Thyroid gland (tissue), 4 donors: ENCODE measurements at regions of chr1 and their contacts with region 1.

Region 1: DNA sequence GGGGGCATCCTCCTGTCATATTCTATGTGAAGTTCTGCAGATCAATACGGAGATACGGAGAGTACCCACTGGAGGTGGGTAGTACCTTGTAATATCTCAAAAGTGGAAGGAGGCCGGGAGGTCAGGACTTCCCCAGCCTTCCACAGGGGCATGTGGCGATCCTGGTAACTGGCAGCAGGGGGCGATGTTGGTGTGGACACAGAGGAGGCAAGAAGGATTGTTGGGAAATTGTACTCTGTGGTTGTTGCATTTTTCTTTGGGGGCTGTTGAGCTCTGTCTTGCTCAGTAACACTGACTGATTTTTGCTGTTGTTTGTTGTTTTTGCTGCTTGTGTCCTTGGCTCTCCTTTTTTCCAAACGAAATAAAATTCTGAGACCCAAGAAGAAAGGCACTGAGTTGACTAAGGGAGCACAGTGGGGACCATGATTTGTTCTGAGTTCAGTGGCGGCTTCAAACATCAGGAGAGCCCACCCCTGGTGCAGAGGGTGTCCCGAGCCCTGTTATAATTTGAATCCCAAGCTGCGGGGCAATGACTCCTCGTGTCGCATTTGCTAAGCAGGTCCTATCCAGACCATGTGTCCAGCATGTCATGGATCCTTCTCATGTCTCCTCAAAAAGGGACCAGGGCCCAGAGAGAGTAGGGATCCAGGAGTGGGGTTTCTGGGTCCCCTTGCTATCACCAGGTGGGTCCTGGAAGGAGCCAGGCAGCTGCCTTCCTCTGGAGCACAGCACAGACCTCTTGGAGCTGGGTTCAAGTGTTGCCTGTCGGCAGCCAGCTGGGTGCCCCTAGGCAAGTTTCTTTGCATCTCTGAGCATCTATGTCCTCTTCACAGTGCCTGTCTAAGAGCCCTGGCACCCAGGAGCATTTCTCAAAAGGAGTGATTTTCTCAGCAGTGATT is 22.8 kb downstream of the LHX4 start:
- DNase-seq: peak; percentile 48 to 60
- H3K4me3 ChIP-seq: no peak overlapping the region
- H3K27ac ChIP-seq: no peak overlapping the region
- H3K4me1 ChIP-seq: no peaks in the 10 kb centered on the region
- H3K27me3 ChIP-seq: no peaks in the 10 kb centered on the region
- CTCF ChIP-seq: peak in 4 of 6 experiments; percentile 40 to 65 (median 58)
- POLR2A ChIP-seq: no peak

Region 2: GRCh38 chr1:180042988-180043622 is 209.8 kb before region 1 on chr1:
- intact Hi-C with region 1: no loop called
- DNase-seq: no peak
- H3K4me3 ChIP-seq: no peak overlapping the region
- H3K27ac ChIP-seq: no peak overlapping the region
- H3K4me1 ChIP-seq: no peaks in the 10 kb centered on the region
- H3K27me3 ChIP-seq: no peaks in the 10 kb centered on the region
- CTCF ChIP-seq: no peak
- POLR2A ChIP-seq: no peak

Region 3: DNA sequence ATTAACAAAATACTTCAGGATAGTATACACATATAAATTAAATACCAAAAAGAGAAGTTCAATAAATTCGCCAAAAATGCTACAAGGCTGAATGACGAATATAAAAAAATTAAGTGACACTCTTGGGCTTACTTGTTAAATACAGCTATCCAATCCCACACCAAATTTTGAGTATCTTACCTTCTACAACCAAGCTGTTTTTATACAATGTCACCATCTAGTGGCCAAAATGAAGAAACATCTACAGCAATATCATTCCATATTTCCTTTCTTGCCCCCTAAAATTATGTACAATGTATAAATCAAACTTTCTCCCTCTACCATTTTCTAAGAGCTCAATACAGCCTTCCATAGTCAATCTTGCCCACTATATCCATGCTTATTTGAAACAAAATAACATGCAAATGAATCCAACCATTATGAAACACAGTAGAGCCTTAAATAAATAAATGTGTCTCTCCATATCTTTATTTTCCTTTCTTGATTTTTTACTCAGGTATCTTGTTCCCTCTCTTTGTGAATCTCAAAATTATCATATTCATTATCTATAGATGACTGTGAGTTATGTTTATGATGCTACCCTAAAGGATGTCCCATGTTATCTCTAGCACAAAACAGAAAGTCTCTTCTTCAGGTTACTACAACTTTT is 163.2 kb after region 1 on chr1:
- intact Hi-C with region 1: loop called (anchors 5 kb)
- DNase-seq: no peak
- H3K4me3 ChIP-seq: no peak overlapping the region
- H3K27ac ChIP-seq: no peak overlapping the region
- H3K4me1 ChIP-seq: no peaks in the 10 kb centered on the region
- H3K27me3 ChIP-seq: no peaks in the 10 kb centered on the region
- CTCF ChIP-seq: peak in 5 of 6 experiments; percentile 16 to 79 (median 61)
- POLR2A ChIP-seq: no peak

Region 4: GRCh38 chr1:180470031-180470430 is 217.1 kb after region 1 on chr1:
- intact Hi-C with region 1: loop called (anchors 10 kb)
- DNase-seq: no peak
- H3K4me3 ChIP-seq: no peak overlapping the region
- H3K27ac ChIP-seq: no peak overlapping the region
- H3K4me1 ChIP-seq: no peaks in the 10 kb centered on the region
- H3K27me3 ChIP-seq: no peaks in the 10 kb centered on the region
- CTCF ChIP-seq: no peak
- POLR2A ChIP-seq: no peak